Posterior vena cava (tissue), 2 donors: ENCODE measurements at regions of chr6 and their contacts with region 1.

Region 1: DNA sequence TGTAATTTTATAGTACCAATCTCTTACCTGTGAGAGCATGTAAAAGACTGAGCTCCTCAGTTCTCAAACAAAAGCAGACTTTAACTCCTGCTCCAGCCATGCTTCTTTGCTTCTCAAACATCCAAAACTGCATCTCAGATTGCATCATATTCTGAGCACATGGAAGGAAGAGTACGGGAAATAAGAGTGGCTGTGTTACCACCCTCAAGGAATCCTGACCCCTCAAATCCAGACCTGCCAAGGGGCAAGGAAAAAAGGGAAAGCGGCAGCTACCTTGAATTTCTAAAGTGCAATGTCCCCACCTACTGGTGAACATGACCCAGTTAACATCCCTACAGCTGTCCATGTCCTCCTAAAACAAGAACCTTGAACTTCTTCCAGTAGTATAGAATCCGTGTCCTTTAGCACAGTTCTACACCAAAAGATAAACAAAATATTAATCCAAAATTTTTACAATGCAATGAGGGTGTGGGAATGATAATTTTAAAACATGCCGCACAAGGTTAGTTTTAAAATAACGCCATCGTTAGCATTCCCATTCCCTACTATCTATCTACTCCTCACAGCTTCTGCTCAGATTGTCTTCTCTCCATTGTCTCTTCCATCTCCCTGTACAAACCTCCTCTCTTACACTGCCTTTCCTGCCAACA is 34.1 kb upstream of the HLA-DQB1 start:
- DNase-seq: no peak

Region 2: DNA sequence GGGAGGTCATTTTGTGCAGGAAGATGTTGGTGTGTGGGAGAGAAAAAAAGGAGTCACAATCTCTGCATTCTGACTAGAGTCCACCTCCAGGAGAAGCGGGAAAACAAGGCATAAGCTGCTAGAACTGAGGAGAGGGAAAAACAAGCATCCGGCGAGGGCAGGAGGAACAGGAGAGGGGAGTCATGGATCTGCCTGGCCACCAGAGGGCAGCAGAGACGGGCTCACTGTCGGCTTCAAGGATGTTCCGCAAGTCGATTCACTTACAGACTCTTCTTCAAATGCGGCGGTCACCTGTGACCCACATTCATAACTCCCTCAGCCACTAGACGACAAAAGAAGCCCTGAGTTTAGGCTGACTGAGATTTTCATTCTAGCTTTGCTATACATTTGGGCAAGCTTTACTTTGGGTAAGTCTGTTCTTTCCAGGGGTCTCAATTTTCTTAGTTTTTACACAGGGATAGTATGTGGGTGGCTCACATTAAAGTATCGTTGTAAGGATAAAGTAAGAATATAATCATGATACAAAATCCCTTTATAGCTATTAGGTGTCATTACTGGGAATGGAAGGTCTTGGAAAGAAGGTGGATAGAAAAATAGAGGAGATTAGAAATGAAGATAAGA is 287.0 kb before region 1 on chr6:
- intact Hi-C with region 1: loop called (anchors 5 to 10 kb)
- DNase-seq: peak; percentile 92

Region 3: DNA sequence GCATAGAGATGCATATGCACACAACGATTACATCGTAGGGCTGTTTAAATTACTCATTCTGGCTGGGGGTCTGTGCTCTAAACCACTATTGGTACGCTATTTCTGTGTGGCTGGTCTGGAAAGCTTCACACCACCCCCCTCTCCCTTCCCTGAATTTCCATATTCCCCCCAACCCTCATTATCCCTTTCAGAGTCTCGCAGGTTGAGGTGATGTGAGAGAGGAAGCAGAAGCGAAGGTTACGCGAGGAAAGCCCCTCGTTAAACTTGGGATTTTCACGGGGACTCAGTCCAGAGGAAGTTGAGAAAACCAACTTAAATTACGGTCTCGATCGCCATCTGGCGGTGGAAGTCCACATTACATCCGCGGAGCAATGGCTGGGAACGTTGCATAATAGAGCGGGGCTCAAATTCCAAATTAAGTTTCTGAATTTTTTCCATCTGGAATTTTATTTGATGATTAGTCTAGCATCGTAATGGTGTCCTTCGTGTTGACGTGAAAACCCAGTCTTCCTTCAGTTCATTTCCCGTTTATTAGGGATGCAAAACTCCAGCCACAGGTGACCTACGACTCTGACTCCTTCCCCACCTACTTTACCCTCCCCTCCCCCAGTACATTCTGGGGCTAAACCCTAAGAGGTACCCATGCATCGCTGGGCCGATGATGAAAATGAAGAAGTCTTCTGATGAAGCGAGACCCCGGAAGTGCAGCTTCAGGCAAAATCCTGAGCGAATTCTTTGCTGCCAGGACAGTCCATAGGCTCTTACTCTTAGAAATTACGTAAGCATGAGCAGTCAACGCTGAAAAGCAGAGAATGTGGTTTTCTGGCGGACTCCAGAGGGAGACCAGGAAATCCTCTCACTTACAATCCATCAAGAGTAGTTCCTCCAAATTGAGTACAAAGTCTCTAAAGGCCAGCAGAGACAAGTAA is 96.6 kb after region 1 on chr6:
- intact Hi-C with region 1: loop called in 1 of 2 experiments (anchors 2 kb)
- DNase-seq: peak; percentile 93